Activated naive CD4-positive, alpha-beta T cell treated with anti-CD3 and anti-CD28 coated beads for 36 hours (primary cell): ENCODE measurements at regions of chr1 and their contacts with region 1.

Region 1: GRCh38 chr1:221741711-221742554 is at the start of gene DUSP10:
- DNase-seq: peak; percentile 99
- H3K4me3 Mint-ChIP-seq: no peak within 1 kb of the TSS
- H3K27ac Mint-ChIP-seq: peak within 1 kb of the TSS; percentile 48
- H3K4me1 Mint-ChIP-seq: peaks cover 33% of the 10 kb centered on the region
- H3K27me3 Mint-ChIP-seq: no peaks in the 10 kb centered on the region
- total RNA-seq, gene DUSP10: 9.1 TPM

Region 2: GRCh38 chr1:221371705-221372104 is 370.2 kb before region 1 on chr1:
- CTCF ChIA-PET with region 1: no interaction called
- intact Hi-C with region 1: no loop called
- DNase-seq: no peak
- H3K4me3 Mint-ChIP-seq: no peak overlapping the region
- H3K27ac Mint-ChIP-seq: no peak overlapping the region
- H3K4me1 Mint-ChIP-seq: no peaks in the 10 kb centered on the region
- H3K27me3 Mint-ChIP-seq: peaks cover 9% of the 10 kb centered on the region

Region 3: DNA sequence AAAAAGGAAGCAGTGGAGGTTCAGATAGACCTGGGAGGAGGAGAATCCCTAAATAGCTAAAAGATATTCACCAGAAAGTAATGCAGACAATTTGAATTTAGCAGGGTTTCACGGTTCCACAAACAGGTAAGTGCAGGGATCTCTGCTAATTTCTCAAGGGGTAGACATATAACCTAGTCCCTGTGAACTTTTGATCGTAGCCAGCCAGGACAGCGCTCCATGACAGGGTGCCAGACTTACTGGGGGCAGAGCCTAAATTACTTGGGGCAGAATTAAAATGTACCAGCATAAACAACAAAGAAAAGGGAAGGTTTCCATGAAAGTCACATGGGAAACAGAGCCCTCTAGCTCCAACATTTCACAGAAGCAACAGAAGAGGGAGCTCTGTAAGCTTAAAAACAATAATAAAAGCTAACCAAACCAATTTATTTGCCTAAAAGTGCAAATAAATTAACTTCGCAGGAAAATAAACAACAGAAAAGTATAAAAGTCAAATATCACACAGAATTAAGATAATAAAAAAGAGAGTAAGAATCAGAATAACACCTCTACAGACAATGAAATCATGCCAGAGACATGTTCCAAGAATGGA is 198.3 kb before region 1 on chr1:
- CTCF ChIA-PET with region 1: interaction called, 3 read pairs
- intact Hi-C with region 1: loop called (anchors 1 kb)
- DNase-seq: no peak
- H3K4me3 Mint-ChIP-seq: no peak overlapping the region
- H3K27ac Mint-ChIP-seq: no peak overlapping the region
- H3K4me1 Mint-ChIP-seq: no peaks in the 10 kb centered on the region
- H3K27me3 Mint-ChIP-seq: peaks cover 8% of the 10 kb centered on the region

Region 4: GRCh38 chr1:221794079-221794670 is 52.2 kb after region 1 on chr1:
- CTCF ChIA-PET with region 1: no interaction called
- intact Hi-C with region 1: loop called (anchors 1 kb)
- DNase-seq: peak; percentile 73
- H3K4me3 Mint-ChIP-seq: peak overlapping the region; percentile 17
- H3K27ac Mint-ChIP-seq: peak overlapping the region; percentile 88
- H3K4me1 Mint-ChIP-seq: peaks cover 40% of the 10 kb centered on the region
- H3K27me3 Mint-ChIP-seq: no peaks in the 10 kb centered on the region

Region 5: GRCh38 chr1:221878134-221878533 is 136.2 kb after region 1 on chr1:
- CTCF ChIA-PET with region 1: interaction called, 4 read pairs
- intact Hi-C with region 1: loop called (anchors 1 kb)
- DNase-seq: no peak
- H3K4me3 Mint-ChIP-seq: no peak overlapping the region
- H3K27ac Mint-ChIP-seq: no peak overlapping the region
- H3K4me1 Mint-ChIP-seq: peaks cover 9% of the 10 kb centered on the region
- H3K27me3 Mint-ChIP-seq: peaks cover 11% of the 10 kb centered on the region

Region 6: GRCh38 chr1:222028116-222028515 is 286.2 kb after region 1 on chr1:
- CTCF ChIA-PET with region 1: no interaction called
- intact Hi-C with region 1: no loop called
- DNase-seq: no peak
- H3K4me3 Mint-ChIP-seq: no peak overlapping the region
- H3K27ac Mint-ChIP-seq: no peak overlapping the region
- H3K4me1 Mint-ChIP-seq: no peaks in the 10 kb centered on the region
- H3K27me3 Mint-ChIP-seq: peaks cover 5% of the 10 kb centered on the region

Region 7: DNA sequence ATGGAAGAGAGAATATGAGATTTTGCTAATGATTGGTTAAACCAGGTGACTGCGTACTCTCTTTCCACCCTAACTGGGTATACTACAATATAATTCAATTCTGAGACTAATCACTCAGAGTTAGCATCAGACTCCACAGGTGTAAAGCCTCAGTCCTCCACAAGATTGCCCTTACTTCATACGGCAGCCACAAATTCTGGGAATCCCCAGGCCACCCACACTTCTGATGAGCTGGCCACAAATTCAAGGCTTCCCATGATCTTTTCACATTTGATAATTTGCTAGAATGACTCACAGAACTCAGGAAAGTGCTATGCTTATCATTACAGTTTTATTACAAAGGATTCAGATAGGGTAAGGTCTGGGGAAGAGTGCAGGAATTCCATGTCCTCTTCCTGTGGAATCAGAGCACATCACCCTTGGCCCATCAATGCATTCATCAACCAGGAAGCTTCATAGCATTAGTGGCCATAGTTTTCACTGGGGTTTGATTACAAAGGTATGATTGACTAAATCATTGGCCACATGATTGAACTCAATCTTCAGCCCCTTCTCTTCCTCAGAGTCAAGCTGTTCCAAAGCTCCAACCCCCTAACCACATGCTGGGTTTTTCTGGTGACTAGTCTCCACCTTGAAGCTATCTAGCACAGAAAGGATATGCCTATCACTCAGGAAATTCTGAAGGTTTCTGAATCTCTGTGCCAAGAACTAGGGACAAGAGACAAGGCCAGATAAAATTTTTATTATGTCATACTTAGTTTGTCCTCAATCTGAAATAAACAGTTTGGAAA is 674.3 kb after region 1 on chr1:
- CTCF ChIA-PET with region 1: no interaction called
- intact Hi-C with region 1: loop called (anchors 1 kb)
- DNase-seq: peak; percentile 69
- H3K4me3 Mint-ChIP-seq: no peak overlapping the region
- H3K27ac Mint-ChIP-seq: no peak overlapping the region
- H3K4me1 Mint-ChIP-seq: peaks cover 59% of the 10 kb centered on the region
- H3K27me3 Mint-ChIP-seq: no peaks in the 10 kb centered on the region